Transverse colon (tissue), 4 donors: ENCODE measurements at regions of chr5 and their contacts with region 1.

Region 1: GRCh38 chr5:51539232-51539631 is 156.0 kb downstream of the ISL1 start:
- DNase-seq: no peak
- H3K4me3 ChIP-seq: no peak overlapping the region
- H3K27ac ChIP-seq: no peak overlapping the region
- H3K4me1 ChIP-seq: no peaks in the 10 kb centered on the region
- H3K27me3 ChIP-seq: no peaks in the 10 kb centered on the region
- CTCF ChIP-seq: no peak
- EP300 ChIP-seq: no peak
- POLR2A ChIP-seq: no peak

Region 2: GRCh38 chr5:51509288-51509687 is 29.9 kb before region 1 on chr5:
- in situ Hi-C with region 1: no loop called
- intact Hi-C with region 1: loop called (anchors 1 kb)
- DNase-seq: no peak
- H3K4me3 ChIP-seq: no peak overlapping the region
- H3K27ac ChIP-seq: no peak overlapping the region
- H3K4me1 ChIP-seq: no peaks in the 10 kb centered on the region
- H3K27me3 ChIP-seq: no peaks in the 10 kb centered on the region
- CTCF ChIP-seq: no peak
- EP300 ChIP-seq: no peak
- POLR2A ChIP-seq: no peak